Posterior cingulate gyrus (tissue), 11 donors: ENCODE measurements at regions of chr5 and their contacts with region 1.

Region 1: GRCh38 chr5:122192497-122193496 is 63.5 kb downstream of the ZNF474 start:
- DNase-seq: peak in 1 of 10 donors; percentile 17

Region 2: DNA sequence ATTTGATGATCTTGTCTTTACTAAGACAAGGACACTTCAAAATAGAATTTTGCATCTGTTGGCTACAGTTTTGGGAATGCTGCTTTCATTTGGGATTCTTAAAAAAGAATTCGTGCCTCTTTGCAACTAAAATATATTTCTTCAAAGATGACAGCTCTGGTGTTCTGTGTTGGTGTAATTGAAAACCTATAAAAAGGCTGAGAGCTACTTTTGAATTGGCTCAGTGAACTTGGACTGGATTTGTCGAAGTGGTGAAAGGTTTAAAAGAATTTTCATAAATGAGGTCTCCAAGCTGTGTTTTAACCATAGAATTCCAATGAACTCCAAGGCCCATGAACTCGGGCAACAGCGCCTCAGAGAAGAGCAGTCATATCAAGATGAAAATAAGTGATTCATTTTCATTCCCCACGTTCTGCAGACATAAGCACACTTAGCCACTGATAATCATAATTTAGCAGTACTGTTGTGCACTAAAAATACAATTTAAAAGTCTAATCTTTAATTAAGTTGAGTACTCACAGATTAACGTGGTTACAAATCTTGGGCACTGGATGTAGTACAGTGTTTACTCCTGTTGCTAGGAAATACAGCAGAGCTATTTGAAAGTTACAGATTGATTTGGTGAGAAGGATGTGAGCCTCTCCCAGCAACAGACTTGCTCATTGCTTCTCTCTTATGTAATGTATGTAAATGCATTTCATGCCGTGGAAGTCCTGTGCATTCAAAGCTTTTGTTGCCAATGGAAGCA is 130.2 kb after region 1 on chr5:
- intact Hi-C with region 1: loop called (anchors 10 kb)
- DNase-seq: no peak

Region 3: GRCh38 chr5:122415030-122415800 is 222.4 kb after region 1 on chr5:
- intact Hi-C with region 1: loop called (anchors 1 kb)
- DNase-seq: peak in 9 of 10 donors; percentile 23 to 92 (median 60)

Region 4: GRCh38 chr5:122500245-122501075 is 307.7 kb after region 1 on chr5:
- intact Hi-C with region 1: loop called (anchors 5 kb)
- DNase-seq: peak in 6 of 10 donors; percentile 16 to 84 (median 46)